ENCODE measurements at regions of chr9 and their contacts with region 1.

Region 1: DNA sequence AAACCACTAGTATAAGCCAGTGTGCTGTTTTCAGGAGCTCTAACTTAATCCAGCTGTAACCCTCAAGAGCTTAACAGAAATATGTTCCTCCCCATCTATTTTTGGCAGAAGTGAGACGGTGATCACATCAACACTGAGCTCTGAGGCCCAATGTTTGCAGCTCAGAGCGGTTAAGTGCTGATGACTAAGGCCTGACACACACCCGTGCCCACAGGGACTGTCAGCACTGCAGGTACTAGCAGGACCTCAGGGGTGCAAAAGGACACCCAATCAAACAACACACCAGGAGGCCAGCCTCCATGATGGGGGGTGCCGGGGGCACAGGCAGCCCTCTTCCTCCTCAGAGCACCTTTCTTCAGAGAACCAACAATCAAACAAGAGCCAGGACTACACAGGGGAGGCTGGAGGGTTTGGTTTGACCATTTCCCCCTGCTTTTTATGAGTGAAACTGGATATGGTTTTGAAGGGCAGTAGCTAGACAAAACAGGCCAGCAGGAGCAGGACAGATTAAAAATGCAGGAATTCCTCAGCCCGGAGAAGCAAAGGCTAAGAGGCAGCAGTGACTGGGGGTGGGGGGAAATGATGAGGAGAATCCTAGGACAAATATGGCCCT is 61.3 kb downstream of the RAPGEF1 start:
- DNase-seq: peak in 1 of 9 donors; percentile 74
- ATAC-seq: peak; percentile 95
- H3K4me3 ChIP-seq: no peak overlapping the region
- H3K4me3 Mint-ChIP-seq: peak overlapping the region in 9 of 10 donors; percentile 10 to 76 (median 42)
- H3K27ac ChIP-seq: no peak overlapping the region
- H3K27ac Mint-ChIP-seq: peak overlapping the region; percentile 16 to 95 (median 60)
- H3K4me1 ChIP-seq: peaks cover 41 to 48% of the 10 kb centered on the region in 2 donors
- H3K4me1 Mint-ChIP-seq: peaks cover 53 to 91% (median 83%) of the 10 kb centered on the region in 7 donors
- H3K27me3 ChIP-seq: no peaks in the 10 kb centered on the region
- H3K27me3 Mint-ChIP-seq: no peaks in the 10 kb centered on the region

Region 2: DNA sequence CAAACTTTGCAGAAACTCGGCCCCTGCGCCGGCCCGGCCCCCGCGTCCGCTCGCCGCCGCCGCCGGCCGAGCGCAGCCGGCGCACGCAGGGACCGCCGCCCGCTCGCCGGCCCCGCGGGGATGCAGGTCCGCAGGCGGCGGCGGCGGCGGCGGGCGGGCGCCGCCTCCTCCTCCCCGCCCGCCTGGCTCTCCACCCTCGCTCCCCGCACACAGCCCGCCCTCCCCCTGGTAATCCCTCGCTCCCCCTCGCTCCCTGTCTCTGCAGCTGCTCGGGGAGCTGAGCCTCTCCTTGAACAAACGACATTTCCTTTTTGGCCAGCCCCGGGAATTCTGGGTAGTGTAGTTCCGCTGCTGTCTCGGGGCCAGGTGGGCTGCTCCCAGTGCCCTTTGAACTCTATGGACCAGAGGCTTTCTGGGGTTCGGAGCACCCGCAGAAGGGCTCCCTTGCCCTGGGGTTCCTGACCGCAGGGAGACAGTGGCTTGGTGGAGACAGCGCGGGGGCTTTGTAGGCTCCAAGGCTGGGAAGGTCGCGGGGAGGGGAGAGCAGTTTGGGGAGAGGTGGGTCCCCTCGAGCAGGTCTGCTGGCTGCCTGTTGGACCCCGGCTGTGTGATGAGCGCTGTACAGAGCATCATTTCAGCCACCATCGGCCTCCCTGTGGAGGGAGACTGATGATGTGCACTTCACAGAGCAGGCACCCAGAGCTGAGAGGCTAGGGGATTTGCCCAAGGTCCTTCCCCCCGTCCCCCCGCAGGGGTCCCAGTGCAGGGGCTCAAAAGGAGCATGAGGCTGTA is 400.5 kb before region 1 on chr9:
- CTCF ChIA-PET with region 1: no interaction called
- POLR2A ChIA-PET with region 1: no interaction called
- intact Hi-C with region 1: loop called in 1 of 2 experiments (anchors 10 kb)
- DNase-seq: peak in 8 of 9 donors; percentile 47 to 77 (median 62)
- ATAC-seq: peak; percentile 67
- H3K4me3 ChIP-seq: peak overlapping the region; percentile 55
- H3K4me3 Mint-ChIP-seq: peak overlapping the region; percentile 83 to 97 (median 88)
- H3K27ac ChIP-seq: peak overlapping the region; percentile 96
- H3K27ac Mint-ChIP-seq: peak overlapping the region; percentile 84 to 95 (median 91)
- H3K4me1 ChIP-seq: peaks cover 21 to 23% of the 10 kb centered on the region in 2 donors
- H3K4me1 Mint-ChIP-seq: peaks cover 17 to 34% (median 27%) of the 10 kb centered on the region in 7 donors
- H3K27me3 ChIP-seq: no peaks in the 10 kb centered on the region
- H3K27me3 Mint-ChIP-seq: peaks cover 0 to 18% (median 0%) of the 10 kb centered on the region in 5 donors

Region 3: GRCh38 chr9:131523451-131524435 is 154.9 kb before region 1 on chr9:
- CTCF ChIA-PET with region 1: no interaction called
- POLR2A ChIA-PET with region 1: no interaction called
- intact Hi-C with region 1: no loop called
- DNase-seq: no peak
- ATAC-seq: no peak
- H3K4me3 ChIP-seq: no peak overlapping the region
- H3K4me3 Mint-ChIP-seq: no peak overlapping the region
- H3K27ac ChIP-seq: no peak overlapping the region
- H3K27ac Mint-ChIP-seq: peak overlapping the region in 3 of 9 donors; percentile 28 to 65 (median 30)
- H3K4me1 ChIP-seq: no peaks in the 10 kb centered on the region
- H3K4me1 Mint-ChIP-seq: peaks cover 0 to 8% (median 7%) of the 10 kb centered on the region in 7 donors
- H3K27me3 ChIP-seq: no peaks in the 10 kb centered on the region
- H3K27me3 Mint-ChIP-seq: no peaks in the 10 kb centered on the region

Region 4: GRCh38 chr9:131656356-131657036 is 22.1 kb before region 1 on chr9:
- CTCF ChIA-PET with region 1: interaction called, 3 read pairs
- POLR2A ChIA-PET with region 1: interaction called, 3 read pairs
- intact Hi-C with region 1: loop called in 1 of 2 experiments (anchors 2 kb)
- DNase-seq: peak in 8 of 9 donors; percentile 40 to 70 (median 50)
- ATAC-seq: peak; percentile 93
- H3K4me3 ChIP-seq: no peak overlapping the region
- H3K4me3 Mint-ChIP-seq: peak overlapping the region; percentile 18 to 69 (median 61)
- H3K27ac ChIP-seq: peak overlapping the region; percentile 49
- H3K27ac Mint-ChIP-seq: peak overlapping the region; percentile 77 to 94 (median 88)
- H3K4me1 ChIP-seq: peaks cover 20 to 28% of the 10 kb centered on the region in 2 donors
- H3K4me1 Mint-ChIP-seq: peaks cover 56 to 88% (median 72%) of the 10 kb centered on the region in 7 donors
- H3K27me3 ChIP-seq: no peaks in the 10 kb centered on the region
- H3K27me3 Mint-ChIP-seq: no peaks in the 10 kb centered on the region

Region 5: DNA sequence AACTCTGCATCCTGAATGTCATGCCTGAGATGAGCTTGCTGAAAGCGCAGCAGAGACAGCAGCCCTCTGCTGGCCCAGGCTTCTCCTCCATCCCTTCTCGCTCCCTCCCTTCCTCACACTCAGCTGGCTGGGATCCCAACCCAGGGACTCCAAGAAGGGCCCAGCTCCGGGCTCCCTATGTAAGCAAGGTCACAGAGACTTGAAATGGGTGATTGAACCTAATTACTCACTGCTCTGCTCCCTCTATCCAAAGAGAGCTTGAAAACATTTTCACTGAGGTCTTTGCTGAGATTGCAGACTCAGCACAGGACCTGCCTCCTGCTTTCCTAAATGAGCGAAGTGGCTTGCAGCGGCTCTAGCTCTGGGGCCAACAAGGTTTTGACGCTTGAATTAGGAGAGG is 18.5 kb after region 1 on chr9:
- CTCF ChIA-PET with region 1: interaction called, 4 read pairs
- POLR2A ChIA-PET with region 1: interaction called, 16 read pairs
- intact Hi-C with region 1: no loop called
- DNase-seq: no peak
- ATAC-seq: no peak
- H3K4me3 ChIP-seq: no peak overlapping the region
- H3K4me3 Mint-ChIP-seq: no peak overlapping the region
- H3K27ac ChIP-seq: no peak overlapping the region
- H3K27ac Mint-ChIP-seq: no peak overlapping the region
- H3K4me1 ChIP-seq: peaks cover 12 to 26% of the 10 kb centered on the region in 2 donors
- H3K4me1 Mint-ChIP-seq: peaks cover 60 to 95% (median 82%) of the 10 kb centered on the region in 7 donors
- H3K27me3 ChIP-seq: no peaks in the 10 kb centered on the region
- H3K27me3 Mint-ChIP-seq: no peaks in the 10 kb centered on the region

Region 6: GRCh38 chr9:131733541-131734061 is 55.0 kb after region 1 on chr9:
- CTCF ChIA-PET with region 1: interaction called, 4 read pairs
- POLR2A ChIA-PET with region 1: interaction called, 4 read pairs
- intact Hi-C with region 1: loop called in 1 of 2 experiments (anchors 2 kb)
- DNase-seq: peak in 2 of 9 donors; percentile 14 to 57
- ATAC-seq: peak; percentile 5
- H3K4me3 ChIP-seq: peak overlapping the region; percentile 46
- H3K4me3 Mint-ChIP-seq: peak overlapping the region; percentile 76 to 89 (median 82)
- H3K27ac ChIP-seq: peak overlapping the region; percentile 73
- H3K27ac Mint-ChIP-seq: peak overlapping the region; percentile 84 to 99 (median 90)
- H3K4me1 ChIP-seq: peaks cover 84 to 85% of the 10 kb centered on the region in 2 donors
- H3K4me1 Mint-ChIP-seq: peaks cover 70 to 93% (median 89%) of the 10 kb centered on the region in 7 donors
- H3K27me3 ChIP-seq: no peaks in the 10 kb centered on the region
- H3K27me3 Mint-ChIP-seq: no peaks in the 10 kb centered on the region